ENCODE measurements at regions of chr2 and their contacts with region 1.

Region 1: GRCh38 chr2:64904413-64905329 is 84.5 kb upstream of the SLC1A4 start:
- DNase-seq: no peak
- ATAC-seq: no peak
- H3K4me3 Mint-ChIP-seq: no peak overlapping the region
- H3K27ac Mint-ChIP-seq: no peak overlapping the region
- H3K4me1 Mint-ChIP-seq: no peaks in the 10 kb centered on the region
- H3K27me3 Mint-ChIP-seq: peaks cover 7% of the 10 kb centered on the region
- CTCF ChIP-seq: no peak

Region 2: DNA sequence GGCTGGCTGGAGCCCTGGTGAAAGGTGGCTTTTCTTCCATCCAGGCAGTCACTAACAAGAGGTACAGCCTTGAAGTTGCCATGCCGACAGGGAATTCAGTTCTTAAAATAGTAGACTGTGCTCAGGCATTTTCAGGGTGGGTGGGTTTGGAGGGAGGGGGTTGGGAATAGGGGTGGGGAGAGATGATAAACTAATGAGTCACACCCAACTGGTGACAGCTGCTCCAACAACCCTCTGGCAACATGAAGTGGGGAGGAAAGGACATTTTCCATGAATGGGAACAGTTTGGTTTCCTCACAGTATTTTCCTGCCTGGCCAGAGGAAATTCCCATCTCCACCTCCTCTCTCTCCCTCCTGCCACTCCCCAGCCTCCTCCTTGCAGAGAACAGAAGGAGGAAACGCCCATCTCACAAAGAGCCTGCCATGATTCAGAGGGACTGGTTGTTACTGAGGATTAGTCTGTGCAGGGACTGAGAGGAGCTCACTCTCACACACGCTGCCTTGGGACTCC is 28.5 kb before region 1 on chr2:
- CTCF ChIA-PET with region 1: no interaction called
- POLR2A ChIA-PET with region 1: no interaction called
- intact Hi-C with region 1: no loop called
- DNase-seq: no peak
- ATAC-seq: no peak
- H3K4me3 Mint-ChIP-seq: no peak overlapping the region
- H3K27ac Mint-ChIP-seq: no peak overlapping the region
- H3K4me1 Mint-ChIP-seq: peaks cover 10% of the 10 kb centered on the region
- H3K27me3 Mint-ChIP-seq: peaks cover 1% of the 10 kb centered on the region
- CTCF ChIP-seq: no peak

Region 3: GRCh38 chr2:65164426-65164891 is 259.8 kb after region 1 on chr2:
- CTCF ChIA-PET with region 1: no interaction called
- POLR2A ChIA-PET with region 1: no interaction called
- intact Hi-C with region 1: loop called (anchors 10 kb)
- DNase-seq: no peak
- ATAC-seq: no peak
- H3K4me3 Mint-ChIP-seq: no peak overlapping the region
- H3K27ac Mint-ChIP-seq: no peak overlapping the region
- H3K4me1 Mint-ChIP-seq: peaks cover 21% of the 10 kb centered on the region
- H3K27me3 Mint-ChIP-seq: no peaks in the 10 kb centered on the region
- CTCF ChIP-seq: no peak

Measured in activated CD8-positive, alpha-beta T cell treated with anti-CD3 and anti-CD28 coated beads for 36 hours (primary cell).